Posterior vena cava (tissue), 2 donors: ENCODE measurements at regions of chr10 and their contacts with region 1.

Region 1: DNA sequence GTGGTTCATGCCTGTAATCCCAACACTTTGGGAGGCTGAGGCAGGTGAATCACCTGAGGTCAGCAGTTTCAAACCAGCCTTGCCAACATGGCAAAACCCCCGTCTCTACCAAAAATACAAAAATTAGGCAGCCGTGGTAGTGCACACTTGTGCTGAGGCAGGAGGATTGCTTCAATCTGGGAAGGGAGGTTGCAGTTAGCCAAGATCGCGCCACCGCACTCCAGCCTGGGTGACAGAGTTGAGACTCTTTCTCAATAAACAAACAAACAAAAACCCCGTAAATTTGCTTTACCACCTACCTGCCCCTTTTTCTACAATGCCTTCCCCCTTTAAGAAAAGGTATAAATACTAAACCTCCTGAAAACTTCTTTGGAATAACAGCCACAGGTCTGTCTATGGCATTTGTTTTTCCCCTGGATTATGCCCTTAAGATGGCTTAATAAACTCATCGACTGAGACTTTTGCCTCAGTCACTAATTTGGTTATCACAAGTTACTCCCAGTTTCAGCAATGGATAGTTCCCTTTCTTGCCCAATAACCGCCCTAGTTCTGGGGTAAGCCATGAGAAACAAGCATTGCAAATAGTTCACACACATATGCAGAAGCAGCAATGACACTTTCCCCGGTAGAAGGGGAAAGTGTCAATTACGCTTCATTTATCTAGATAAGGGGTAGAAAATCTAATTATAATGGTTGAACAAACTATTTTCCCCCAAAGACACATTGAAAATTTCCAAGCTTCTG is 52.8 kb upstream of the SVIL start:
- DNase-seq: no peak

Region 2: GRCh38 chr10:29702273-29703164 is 14.9 kb after region 1 on chr10:
- intact Hi-C with region 1: loop called in 1 of 2 experiments (anchors 1 kb)
- DNase-seq: no peak

Region 3: DNA sequence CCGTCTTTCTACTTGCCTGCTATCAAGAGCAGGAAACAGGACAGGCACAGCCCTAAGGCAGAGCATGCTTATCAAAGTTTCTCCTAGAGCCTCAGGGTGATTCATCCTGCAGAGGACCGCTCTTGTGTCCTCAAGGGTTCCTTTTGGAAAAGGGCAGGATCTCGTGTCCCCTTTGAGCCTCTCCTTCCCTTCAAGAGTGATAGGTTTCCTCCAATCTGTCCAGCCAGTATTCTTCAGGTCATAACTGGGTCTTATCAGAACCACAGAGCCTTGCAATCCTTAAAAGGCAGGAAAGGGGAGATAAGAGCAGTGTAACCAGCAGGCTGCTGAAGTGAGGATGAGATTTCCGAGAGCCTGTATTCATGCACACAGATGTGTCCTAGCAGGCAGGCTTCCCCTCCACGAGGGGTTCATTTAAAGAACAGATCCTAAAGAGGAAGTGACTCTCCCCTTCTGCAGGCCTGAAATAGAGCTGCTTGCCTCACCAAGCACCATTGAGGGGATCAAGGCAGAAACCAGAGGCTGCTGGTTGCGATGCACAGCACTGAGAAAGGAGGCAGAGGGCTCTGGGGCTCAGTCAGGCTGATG is 37.6 kb after region 1 on chr10:
- intact Hi-C with region 1: no loop called
- DNase-seq: no peak

Region 4: GRCh38 chr10:30098613-30099012 is 411.0 kb after region 1 on chr10:
- intact Hi-C with region 1: no loop called
- DNase-seq: no peak